KBM-7 (cell line): ENCODE measurements at regions of chr17 and their contacts with region 1.

Region 1: DNA sequence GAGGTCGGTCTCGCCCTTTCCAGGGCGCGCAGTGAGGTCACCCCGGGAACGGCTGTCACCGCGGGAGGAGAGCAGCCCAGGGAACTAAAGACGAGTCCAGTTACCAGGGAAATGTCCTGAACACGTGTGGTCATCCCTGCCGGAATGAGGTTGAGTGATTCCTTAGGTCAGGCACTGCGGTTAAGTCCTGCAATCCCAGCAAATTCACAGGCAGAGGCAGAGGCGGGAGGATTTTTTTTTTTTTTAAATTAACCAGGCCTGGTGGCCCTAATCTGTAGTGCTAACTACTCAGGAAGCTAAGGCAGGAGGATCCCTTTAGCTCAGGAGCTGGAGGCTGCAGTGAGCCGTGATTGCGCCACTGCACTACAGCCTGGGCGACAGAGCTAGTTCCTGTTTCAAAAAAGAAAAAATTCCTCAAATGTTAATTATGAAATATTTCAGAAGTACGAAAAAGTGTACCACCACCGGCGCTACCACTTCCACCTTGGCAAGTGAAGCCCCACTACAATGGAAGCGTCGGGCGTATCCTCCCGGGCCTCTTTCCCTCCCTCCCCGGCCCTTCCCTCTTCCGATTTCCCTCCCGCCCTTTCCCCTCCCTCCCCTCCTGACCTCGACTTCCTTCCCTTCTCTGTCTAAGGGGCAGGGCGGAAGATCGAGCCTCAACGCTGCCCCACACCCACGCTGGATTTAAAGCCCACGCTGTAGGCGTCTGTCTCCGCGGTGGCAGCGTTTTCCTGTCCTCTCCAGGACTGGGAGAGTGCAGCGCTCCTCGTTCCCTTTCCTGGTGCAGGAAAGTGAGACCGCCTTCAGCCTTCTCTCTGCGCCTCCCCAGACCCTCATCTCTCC is 27.3 kb downstream of the SLFN11 start:
- DNase-seq: peak; percentile 86

Region 2: GRCh38 chr17:34980681-34981537 is 365.2 kb before region 1 on chr17:
- in situ Hi-C with region 1: no loop called
- DNase-seq: peak; percentile 85

Region 3: GRCh38 chr17:35242805-35243560 is 103.2 kb before region 1 on chr17 and contains the start of gene SLFN5:
- in situ Hi-C with region 1: loop called (anchors 25 kb)
- DNase-seq: peak; percentile 87

Region 4: DNA sequence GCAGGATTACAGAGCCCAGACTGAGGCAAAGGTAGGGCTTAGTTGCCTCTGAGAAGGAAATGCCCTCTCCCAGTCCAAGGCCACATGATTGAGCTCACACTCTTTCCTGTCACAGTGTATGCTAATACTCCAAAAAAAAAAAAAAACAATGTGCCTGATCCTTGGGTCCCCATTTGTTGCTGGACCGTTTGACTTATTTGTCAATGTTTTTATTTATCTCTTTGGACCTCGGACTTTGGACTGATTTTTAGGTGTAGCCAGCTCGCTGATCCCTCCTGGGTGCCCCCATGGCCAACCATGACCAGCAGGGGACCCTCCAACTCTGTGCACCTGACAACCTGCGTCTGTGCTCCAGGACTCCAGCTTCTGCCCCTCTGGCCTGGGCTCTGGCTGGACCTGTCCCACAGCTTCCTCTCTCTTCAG is 635.8 kb after region 1 on chr17:
- in situ Hi-C with region 1: no loop called
- DNase-seq: peak; percentile 11